Astrocyte of the cerebellum (primary cell): ENCODE measurements at regions of chr14 and their contacts with region 1.

Region 1: GRCh38 chr14:74733221-74733620 is 20.3 kb downstream of the FCF1 start:
- DNase-seq: no peak
- H3K4me3 ChIP-seq: no peak overlapping the region
- CTCF ChIP-seq: no peak

Region 2: DNA sequence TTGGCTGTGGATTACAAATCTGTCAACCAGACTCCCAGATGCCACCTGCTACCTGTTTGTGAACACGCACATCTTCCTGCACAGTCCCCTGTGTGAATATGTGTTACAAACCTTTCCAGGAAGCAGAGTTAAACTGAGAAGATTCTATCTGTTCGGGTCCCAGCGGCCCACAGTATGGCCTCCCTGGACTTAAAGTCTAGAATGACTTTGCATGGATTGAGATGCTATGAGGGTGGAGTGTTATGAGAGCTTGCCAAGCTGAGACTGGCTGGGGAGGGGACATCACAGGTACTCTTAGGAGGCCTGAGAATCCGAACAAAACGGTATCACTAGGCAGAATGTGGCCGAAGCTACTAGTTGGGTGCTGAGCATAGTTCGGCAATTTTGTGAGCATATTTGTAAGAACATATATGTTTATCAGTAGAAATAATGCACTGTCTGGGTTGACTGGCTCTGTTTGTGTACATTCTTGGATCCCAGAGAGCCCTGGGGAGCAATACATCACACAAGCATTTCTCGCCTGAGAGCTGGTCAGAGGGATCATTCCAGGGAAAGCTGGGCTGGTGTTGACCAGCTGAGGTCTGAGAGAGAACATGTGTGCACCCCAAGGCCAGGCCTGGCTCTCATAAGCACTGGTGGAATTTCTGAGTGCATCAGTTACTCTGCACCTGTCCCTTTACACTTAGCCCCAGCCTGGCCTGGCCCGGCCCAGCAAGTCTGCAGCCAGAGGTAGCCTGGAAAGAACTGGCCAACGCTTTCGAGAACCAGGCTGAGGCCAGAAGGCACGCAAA is 91.4 kb before region 1 on chr14:
- in situ Hi-C with region 1: loop called (anchors 5 kb)
- DNase-seq: no peak
- H3K4me3 ChIP-seq: no peak overlapping the region
- CTCF ChIP-seq: no peak